ENCODE measurements at regions of chr14 and their contacts with region 1.

Region 1: GRCh38 chr14:24271134-24271833 is at the start of gene RABGGTA:
- DNase-seq: peak; percentile 82 to 98
- H3K4me3 ChIP-seq: peak within 1 kb of the TSS; percentile 61 to 89 (median 82)
- H3K27ac ChIP-seq: peak within 1 kb of the TSS; percentile 96
- H3K4me1 ChIP-seq: peaks cover 0 to 4% (median 2%) of the 10 kb centered on the region in 4 experiments; a peak in 4 of 7 replicates
- H3K27me3 ChIP-seq: no peaks in the 10 kb centered on the region; a peak in 1 of 7 replicates
- CTCF ChIP-seq: peak; percentile 87 to 90 (median 90)
- EP300 ChIP-seq: peak; percentile 14 to 76; a peak in 2 of 3 replicates
- POLR2A ChIP-seq: peak in 1 of 2 experiments; percentile 96; a peak in 2 of 3 replicates
- RAD21 ChIP-seq: peak in 1 of 2 experiments; percentile 25; a peak in 2 of 4 replicates
- total RNA-seq, gene RABGGTA: 16.0 and 16.9 TPM in 2 replicates

Region 2: DNA sequence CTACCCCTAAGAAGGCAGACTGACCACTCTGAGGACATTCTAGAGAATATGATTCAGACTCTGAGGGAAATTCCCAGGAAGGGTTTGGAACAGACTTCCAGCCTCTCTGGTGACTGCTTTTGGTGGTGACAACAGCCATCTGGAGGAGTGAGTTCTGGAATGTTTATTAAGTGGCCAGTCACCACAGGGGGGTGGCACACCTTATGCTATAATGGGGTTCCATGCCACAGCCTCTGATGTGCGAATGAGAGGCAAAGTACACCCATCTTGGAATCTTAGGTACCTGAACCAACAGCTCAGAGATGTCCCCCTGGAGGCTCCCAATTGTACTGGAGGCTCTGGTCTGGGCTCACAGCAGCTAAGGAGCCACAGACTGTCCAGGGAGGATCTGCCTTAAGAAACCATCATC is 19.4 kb before region 1 on chr14:
- CTCF ChIA-PET with region 1: interaction called, 25 read pairs
- POLR2A ChIA-PET with region 1: interaction called, 26 read pairs
- DNase-seq: no peak
- H3K4me3 ChIP-seq: no peak overlapping the region
- H3K27ac ChIP-seq: no peak overlapping the region
- H3K4me1 ChIP-seq: no peaks in the 10 kb centered on the region
- H3K27me3 ChIP-seq: no peaks in the 10 kb centered on the region
- CTCF ChIP-seq: peak in 1 of 3 experiments; percentile 13; a peak in 1 of 4 replicates
- EP300 ChIP-seq: no peak
- POLR2A ChIP-seq: no peak
- RAD21 ChIP-seq: no peak

Region 3: GRCh38 chr14:24259252-24259995 is 11.9 kb before region 1 on chr14:
- CTCF ChIA-PET with region 1: interaction called, 25 read pairs
- POLR2A ChIA-PET with region 1: interaction called, 13 read pairs
- DNase-seq: no peak
- H3K4me3 ChIP-seq: no peak overlapping the region
- H3K27ac ChIP-seq: no peak overlapping the region
- H3K4me1 ChIP-seq: peaks cover 0 to 2% (median 0%) of the 10 kb centered on the region in 4 experiments; a peak in 1 of 7 replicates
- H3K27me3 ChIP-seq: no peaks in the 10 kb centered on the region; a peak in 1 of 7 replicates
- CTCF ChIP-seq: no peak
- EP300 ChIP-seq: no peak
- POLR2A ChIP-seq: no peak
- RAD21 ChIP-seq: no peak

Region 4: DNA sequence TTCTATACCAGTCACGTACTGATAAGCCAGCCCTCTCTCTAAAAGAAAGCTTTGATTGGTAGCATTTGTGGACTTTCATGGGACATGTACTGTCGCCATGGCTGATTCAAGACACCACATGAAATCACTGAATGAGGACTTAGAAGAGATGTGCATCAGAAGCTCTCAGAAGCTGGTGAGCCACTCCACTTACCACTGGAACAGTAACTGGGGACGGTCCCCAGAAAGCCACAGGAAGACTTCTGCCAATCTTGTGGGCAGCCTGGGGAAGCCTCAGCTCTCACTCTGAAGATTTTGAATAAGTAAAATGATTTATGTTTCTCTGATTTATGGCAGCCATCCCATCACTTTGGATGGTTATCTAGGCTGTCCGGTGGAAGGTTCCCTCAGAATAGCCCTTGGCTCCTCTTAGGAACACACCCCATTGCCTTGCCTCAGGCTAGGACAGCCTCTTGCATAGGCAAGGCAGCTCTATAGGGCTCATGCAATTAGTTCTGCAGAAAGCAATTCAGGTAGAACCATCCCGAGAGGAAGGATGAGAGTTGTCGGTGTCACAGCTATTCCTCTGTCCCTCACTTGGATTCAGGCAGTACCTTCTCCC is 18.5 kb after region 1 on chr14:
- CTCF ChIA-PET with region 1: interaction called, 94 read pairs
- POLR2A ChIA-PET with region 1: interaction called, 8 read pairs
- DNase-seq: no peak
- H3K4me3 ChIP-seq: no peak overlapping the region
- H3K27ac ChIP-seq: no peak overlapping the region
- H3K4me1 ChIP-seq: no peaks in the 10 kb centered on the region
- H3K27me3 ChIP-seq: no peaks in the 10 kb centered on the region
- CTCF ChIP-seq: no peak
- EP300 ChIP-seq: no peak
- POLR2A ChIP-seq: no peak
- RAD21 ChIP-seq: no peak

Region 5: GRCh38 chr14:24299255-24300195 is 28.2 kb after region 1 on chr14 and contains the starts of genes DHRS1 and NOP9:
- CTCF ChIA-PET with region 1: interaction called, 94 read pairs
- POLR2A ChIA-PET with region 1: interaction called, 12 read pairs
- DNase-seq: peak; percentile 61 to 99
- H3K4me3 ChIP-seq: peak within 1 kb of the TSS; percentile 76 to 91 (median 88)
- H3K27ac ChIP-seq: no peak within 1 kb of the TSS
- H3K4me1 ChIP-seq: peaks cover 0 to 7% (median 4%) of the 10 kb centered on the region in 4 experiments; a peak in 5 of 7 replicates
- H3K27me3 ChIP-seq: no peaks in the 10 kb centered on the region
- CTCF ChIP-seq: no peak
- EP300 ChIP-seq: peak in 1 of 2 experiments; percentile 10; a peak in 1 of 3 replicates
- POLR2A ChIP-seq: peak; percentile 81 to 88
- RAD21 ChIP-seq: no peak
- total RNA-seq, gene DHRS1: 8.8 and 13.4 TPM in 2 replicates
- total RNA-seq, gene NOP9: 34.8 and 39.3 TPM in 2 replicates